HepG2 (cell line): ENCODE measurements at regions of chr2 and their contacts with region 1.

Region 1: GRCh38 chr2:197453161-197453914 is at the start of gene COQ10B:
- DNase-seq: peak; percentile 100
- ATAC-seq: peak; percentile 89
- H3K4me3 ChIP-seq: peak within 1 kb of the TSS; percentile 80 to 96 (median 95)
- H3K27ac ChIP-seq: peak within 1 kb of the TSS; percentile 97
- H3K4me1 ChIP-seq: peaks cover 31% of the 10 kb centered on the region
- H3K27me3 ChIP-seq: no peaks in the 10 kb centered on the region; a peak in 1 of 5 replicates
- CTCF ChIP-seq: peak; percentile 73
- EP300 ChIP-seq: peak; percentile 37 to 56; a peak in 2 of 4 replicates
- POLR2A ChIP-seq: peak; percentile 72 to 97
- RAD21 ChIP-seq: peak; percentile 81
- total RNA-seq, gene COQ10B: 34.9 and 41.8 TPM in 2 replicates

Region 2: DNA sequence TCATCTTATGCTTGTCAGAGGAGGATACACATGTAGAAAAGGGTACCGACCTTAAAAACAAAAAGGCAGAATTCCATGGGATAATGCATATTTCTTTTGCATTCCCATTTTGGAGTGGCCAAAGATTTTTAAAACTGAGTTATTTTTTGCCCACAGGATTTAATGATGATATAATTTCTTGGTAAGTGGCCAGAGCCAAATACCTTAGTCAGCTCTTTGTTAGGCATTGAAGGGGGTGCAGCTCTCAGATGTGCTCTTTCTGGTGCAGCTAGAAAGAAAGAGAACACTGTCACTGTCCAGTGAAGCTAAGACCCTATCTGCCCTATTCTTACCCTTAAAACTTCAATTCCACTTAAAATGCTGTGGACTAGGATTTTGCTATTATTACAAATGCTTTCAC is 10.8 kb after region 1 on chr2:
- CTCF ChIA-PET with region 1: no interaction called
- POLR2A ChIA-PET with region 1: interaction called, 41 read pairs
- in situ Hi-C with region 1: no loop called
- intact Hi-C with region 1: no loop called
- DNase-seq: no peak
- ATAC-seq: no peak
- H3K4me3 ChIP-seq: no peak overlapping the region
- H3K27ac ChIP-seq: no peak overlapping the region
- H3K4me1 ChIP-seq: 0 out of 2 replicates have a peak, but pooled peaks cover 1% of the 10 kb centered on the region
- H3K27me3 ChIP-seq: no peaks in the 10 kb centered on the region
- CTCF ChIP-seq: no peak
- EP300 ChIP-seq: no peak
- POLR2A ChIP-seq: no peak
- RAD21 ChIP-seq: no peak

Region 3: DNA sequence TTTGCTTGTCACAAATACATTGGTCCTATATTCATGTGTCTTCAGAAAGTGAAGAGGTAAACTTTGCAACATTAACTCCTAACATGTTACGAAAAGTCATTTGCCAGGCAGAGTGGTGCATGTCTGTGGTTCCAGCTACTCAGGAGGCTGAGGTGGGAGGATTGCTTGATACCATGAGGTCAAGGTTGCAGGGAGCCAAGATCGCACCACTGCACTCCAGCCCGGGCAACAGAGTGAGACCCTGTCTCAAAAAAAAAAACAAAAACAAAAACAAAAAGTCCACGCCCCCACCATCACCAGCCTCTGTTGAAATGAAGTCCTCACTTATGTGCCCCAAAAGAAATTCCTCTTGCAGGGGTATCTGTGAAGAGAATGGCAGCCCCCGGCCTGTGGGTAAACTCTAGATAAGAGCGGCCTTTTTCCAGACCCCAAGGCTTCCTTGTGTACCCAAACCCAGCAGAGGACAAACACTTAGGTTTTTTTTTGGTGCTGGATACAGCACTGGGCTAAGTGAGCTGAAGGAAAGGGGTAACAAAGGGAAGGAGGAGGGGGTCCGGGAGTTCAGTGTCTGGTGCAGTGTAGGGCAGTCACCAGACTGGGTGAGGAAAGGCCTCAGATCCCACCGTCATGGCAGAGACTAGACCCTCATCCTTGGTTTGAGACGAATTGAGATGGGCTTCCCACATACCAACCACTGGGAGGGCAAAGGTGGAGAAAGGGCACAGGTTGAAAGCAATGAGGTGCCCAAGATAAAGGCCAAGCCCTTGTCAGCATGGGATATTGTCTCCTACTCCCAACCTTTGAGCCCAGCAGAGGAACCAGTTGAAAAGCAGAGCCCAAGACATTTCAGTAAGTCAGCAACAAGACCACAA is 27.1 kb after region 1 on chr2:
- CTCF ChIA-PET with region 1: no interaction called
- POLR2A ChIA-PET with region 1: interaction called, 124 read pairs
- in situ Hi-C with region 1: no loop called
- intact Hi-C with region 1: loop called (anchors 1 kb)
- DNase-seq: no peak
- ATAC-seq: peak; percentile 32
- H3K4me3 ChIP-seq: peak overlapping the region; percentile 26 to 63 (median 38); a peak in 5 of 6 replicates
- H3K27ac ChIP-seq: peak overlapping the region; percentile 91
- H3K4me1 ChIP-seq: peaks cover 69% of the 10 kb centered on the region
- H3K27me3 ChIP-seq: no peaks in the 10 kb centered on the region
- CTCF ChIP-seq: no peak
- EP300 ChIP-seq: no peak
- POLR2A ChIP-seq: no peak
- RAD21 ChIP-seq: no peak

Region 4: DNA sequence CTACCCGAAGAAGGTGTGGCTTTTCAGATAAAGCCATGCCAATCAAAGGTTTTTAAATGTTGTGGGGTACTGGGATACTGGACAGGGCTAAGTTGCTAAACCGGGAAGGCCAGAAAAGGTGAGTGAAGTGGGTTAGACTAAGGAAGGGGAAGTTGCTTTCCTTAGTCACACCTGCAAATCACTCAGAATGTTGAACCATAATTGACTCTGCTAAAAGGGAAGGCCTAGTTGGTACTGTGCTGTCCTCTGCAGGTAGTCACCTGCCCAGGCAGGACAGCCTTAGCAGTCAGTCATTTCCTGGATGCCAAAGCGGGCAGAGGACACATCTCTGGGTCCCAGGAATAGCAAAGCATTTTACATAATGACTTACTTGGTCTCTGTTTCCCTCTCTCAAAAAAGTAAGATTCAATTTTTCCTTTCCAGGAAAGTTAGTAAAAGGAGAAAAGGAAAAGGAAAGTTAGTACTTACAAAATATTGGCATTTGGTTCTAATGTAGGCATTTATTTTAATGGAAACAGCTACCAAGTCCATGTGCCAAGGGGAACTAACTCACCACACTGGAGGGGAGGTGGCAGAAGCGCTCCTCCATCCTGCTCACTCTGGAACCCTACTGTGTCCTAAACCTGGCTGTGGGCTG is 161.8 kb after region 1 on chr2:
- CTCF ChIA-PET with region 1: no interaction called
- POLR2A ChIA-PET with region 1: interaction called, 22 read pairs
- in situ Hi-C with region 1: no loop called
- intact Hi-C with region 1: no loop called
- DNase-seq: peak; percentile 27
- ATAC-seq: peak; percentile 57
- H3K4me3 ChIP-seq: no peak overlapping the region
- H3K27ac ChIP-seq: no peak overlapping the region
- H3K4me1 ChIP-seq: peaks cover 34% of the 10 kb centered on the region
- H3K27me3 ChIP-seq: peaks cover 1 to 40% of the 10 kb centered on the region in 2 experiments; a peak in 4 of 5 replicates
- CTCF ChIP-seq: peak; percentile 75
- EP300 ChIP-seq: no peak
- POLR2A ChIP-seq: no peak
- RAD21 ChIP-seq: no peak

Region 5: GRCh38 chr2:197705121-197705911 is 252.0 kb after region 1 on chr2 and contains the start of gene MARS2:
- CTCF ChIA-PET with region 1: no interaction called
- POLR2A ChIA-PET with region 1: interaction called, 11 read pairs
- in situ Hi-C with region 1: no loop called
- intact Hi-C with region 1: loop called (anchors 5 kb)
- DNase-seq: peak; percentile 88
- ATAC-seq: peak; percentile 88
- H3K4me3 ChIP-seq: peak within 1 kb of the TSS; percentile 60 to 86 (median 85)
- H3K27ac ChIP-seq: peak within 1 kb of the TSS; percentile 54
- H3K4me1 ChIP-seq: peaks cover 30% of the 10 kb centered on the region
- H3K27me3 ChIP-seq: no peaks in the 10 kb centered on the region; a peak in 1 of 5 replicates
- CTCF ChIP-seq: peak; percentile 42
- EP300 ChIP-seq: no peak; a peak in 1 of 4 replicates
- POLR2A ChIP-seq: peak; percentile 93 to 97
- RAD21 ChIP-seq: peak; percentile 17; the same call in 1 of the 2 replicates
- total RNA-seq, gene MARS2: 16.2 and 19.5 TPM in 2 replicates